Heart left ventricle (tissue), 16 donors: ENCODE measurements at regions of chr3 and their contacts with region 1.

Region 1: GRCh38 chr3:48635222-48636021 is at the start of gene SLC26A6:
- DNase-seq: peak; percentile 97 to 99 (median 98)
- ATAC-seq: peak; percentile 98 to 99 (median 98)
- H3K4me3 ChIP-seq: peak within 1 kb of the TSS; percentile 64 to 96 (median 86)
- H3K27ac ChIP-seq: peak within 1 kb of the TSS; percentile 28 to 90 (median 86)
- H3K4me1 ChIP-seq: peaks cover 0 to 28% (median 19%) of the 10 kb centered on the region in 12 donors
- H3K27me3 ChIP-seq: no peaks in the 10 kb centered on the region
- CTCF ChIP-seq: peak in 10 of 12 donors; percentile 5 to 67 (median 45)
- POLR2A ChIP-seq: peak in 1 of 2 donors; percentile 62
- total RNA-seq, gene SLC26A6: 6.7 to 14.6 (median 9.2) TPM

Region 2: GRCh38 chr3:48465531-48466378 is 169.7 kb before region 1 on chr3:
- intact Hi-C with region 1: loop called in 1 of 10 experiments (anchors 10 kb)
- DNase-seq: peak; percentile 95 to 99 (median 98)
- ATAC-seq: peak; percentile 95 to 96 (median 95)
- H3K4me3 ChIP-seq: peak overlapping the region; percentile 24 to 84 (median 62)
- H3K27ac ChIP-seq: peak overlapping the region; percentile 92 to 100 (median 99)
- H3K4me1 ChIP-seq: peaks cover 13 to 63% (median 55%) of the 10 kb centered on the region in 12 donors
- H3K27me3 ChIP-seq: no peaks in the 10 kb centered on the region
- CTCF ChIP-seq: peak; percentile 55 to 90 (median 76)
- POLR2A ChIP-seq: peak in 1 of 2 donors; percentile 81

Region 3: GRCh38 chr3:48609088-48610005 is 26.1 kb before region 1 on chr3 and contains the start of gene UQCRC1:
- intact Hi-C with region 1: loop called in 2 of 10 experiments (anchors 1 to 2 kb)
- DNase-seq: peak; percentile 92 to 97 (median 94)
- ATAC-seq: peak; percentile 99
- H3K4me3 ChIP-seq: peak within 1 kb of the TSS; percentile 65 to 98 (median 84)
- H3K27ac ChIP-seq: peak within 1 kb of the TSS; percentile 83 to 98 (median 94)
- H3K4me1 ChIP-seq: peaks cover 0 to 51% (median 19%) of the 10 kb centered on the region in 12 donors
- H3K27me3 ChIP-seq: no peaks in the 10 kb centered on the region
- CTCF ChIP-seq: peak; percentile 58 to 91 (median 79)
- POLR2A ChIP-seq: peak; percentile 85 to 89
- total RNA-seq, gene UQCRC1: 580 to 2,191 (median 1,008) TPM

Region 4: DNA sequence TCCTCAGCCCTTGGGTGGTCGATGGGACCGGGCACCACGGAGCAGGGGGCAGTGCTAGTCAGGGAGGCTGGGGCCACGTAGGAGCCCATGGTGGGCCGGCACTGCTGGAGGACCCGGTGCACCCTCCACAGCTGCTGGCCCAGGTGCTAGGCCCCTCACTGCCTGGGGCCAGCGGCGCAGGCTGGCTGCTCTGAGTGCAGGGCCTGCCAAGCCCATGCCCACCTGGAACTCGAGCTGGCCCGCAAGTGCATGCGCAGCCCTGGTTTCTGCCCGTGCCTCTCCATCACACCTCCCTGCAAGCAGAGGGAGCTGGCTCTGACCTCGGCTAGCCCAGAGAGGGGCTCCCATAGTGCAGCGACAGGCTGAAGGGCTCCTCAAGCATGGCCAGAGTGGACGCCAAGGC is 578.1 kb after region 1 on chr3:
- intact Hi-C with region 1: no loop called
- DNase-seq: no peak
- ATAC-seq: peak in 1 of 4 donors; percentile 36
- H3K4me3 ChIP-seq: no peak overlapping the region
- H3K27ac ChIP-seq: no peak overlapping the region
- H3K4me1 ChIP-seq: peaks cover 0 to 16% (median 9%) of the 10 kb centered on the region in 12 donors
- H3K27me3 ChIP-seq: no peaks in the 10 kb centered on the region
- CTCF ChIP-seq: no peak
- POLR2A ChIP-seq: no peak